B cell (primary cell): ENCODE measurements at regions of chr17 and their contacts with region 1.

Region 1: DNA sequence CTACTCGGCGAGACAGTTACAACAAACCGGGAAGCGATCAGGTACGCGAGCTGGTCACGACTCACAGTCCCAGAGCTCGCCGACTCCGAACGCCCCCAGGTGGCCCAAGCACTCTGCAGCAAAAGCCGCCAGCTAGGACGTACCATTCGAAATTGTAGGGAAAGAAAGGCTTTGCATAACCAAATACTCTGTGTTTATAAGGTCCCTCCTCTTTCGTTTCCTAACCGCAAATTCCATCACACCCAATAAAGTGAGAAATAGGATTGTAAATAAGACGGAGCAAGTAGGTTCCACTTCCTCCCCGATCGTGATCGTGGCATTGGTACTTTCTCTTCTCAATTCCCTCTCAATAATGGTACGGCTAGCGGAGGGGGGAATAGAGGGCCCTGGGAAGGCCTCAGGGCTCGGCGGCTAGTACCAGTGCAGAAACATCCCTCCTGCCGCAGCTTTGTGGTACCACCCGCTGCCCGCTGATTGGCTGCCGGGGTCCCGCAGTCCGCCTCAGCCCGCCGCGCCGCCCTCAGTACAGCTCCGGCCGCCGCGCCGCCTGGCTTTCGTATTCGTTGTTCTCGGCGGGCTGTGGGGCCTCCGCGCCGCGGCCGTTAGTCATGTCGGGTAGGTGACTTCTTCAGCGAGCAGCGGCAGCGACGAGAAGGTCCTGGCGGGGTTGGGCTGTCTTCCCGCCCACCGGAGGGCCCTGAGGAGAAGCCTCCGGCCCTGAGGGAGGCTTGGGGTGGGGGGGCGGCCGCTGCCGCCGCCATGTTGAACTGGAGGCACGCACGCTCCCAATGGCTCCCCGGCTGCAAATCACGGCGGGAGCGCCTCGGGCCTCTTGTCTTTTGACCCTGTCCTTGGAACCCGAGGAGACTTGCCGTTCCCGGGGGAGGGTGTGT is at the start of gene TAF15:
- DNase-seq: peak; percentile 98
- ATAC-seq: peak; percentile 87
- H3K4me3 ChIP-seq: peak within 1 kb of the TSS; percentile 71 to 92 (median 90)
- H3K4me3 Mint-ChIP-seq: peak within 1 kb of the TSS; percentile 92
- H3K27ac ChIP-seq: peak within 1 kb of the TSS; percentile 91 to 93
- H3K27ac Mint-ChIP-seq: peak within 1 kb of the TSS; percentile 97
- H3K4me1 ChIP-seq: peaks cover 29 to 34% of the 10 kb centered on the region in 2 donors
- H3K4me1 Mint-ChIP-seq: peaks cover 47% of the 10 kb centered on the region
- H3K27me3 ChIP-seq: no peaks in the 10 kb centered on the region
- H3K27me3 Mint-ChIP-seq: no peaks in the 10 kb centered on the region
- CTCF ChIP-seq: peak; percentile 81
- total RNA-seq, gene TAF15: 246 and 249 TPM in 2 replicates

Region 2: GRCh38 chr17:35322749-35323148 is 486.5 kb before region 1 on chr17:
- CTCF ChIA-PET with region 1: no interaction called
- POLR2A ChIA-PET with region 1: no interaction called
- intact Hi-C with region 1: no loop called
- DNase-seq: no peak
- ATAC-seq: no peak
- H3K4me3 ChIP-seq: no peak overlapping the region
- H3K4me3 Mint-ChIP-seq: no peak overlapping the region
- H3K27ac ChIP-seq: no peak overlapping the region
- H3K27ac Mint-ChIP-seq: no peak overlapping the region
- H3K4me1 ChIP-seq: no peaks in the 10 kb centered on the region
- H3K4me1 Mint-ChIP-seq: no peaks in the 10 kb centered on the region
- H3K27me3 ChIP-seq: no peaks in the 10 kb centered on the region
- H3K27me3 Mint-ChIP-seq: no peaks in the 10 kb centered on the region
- CTCF ChIP-seq: no peak

Region 3: DNA sequence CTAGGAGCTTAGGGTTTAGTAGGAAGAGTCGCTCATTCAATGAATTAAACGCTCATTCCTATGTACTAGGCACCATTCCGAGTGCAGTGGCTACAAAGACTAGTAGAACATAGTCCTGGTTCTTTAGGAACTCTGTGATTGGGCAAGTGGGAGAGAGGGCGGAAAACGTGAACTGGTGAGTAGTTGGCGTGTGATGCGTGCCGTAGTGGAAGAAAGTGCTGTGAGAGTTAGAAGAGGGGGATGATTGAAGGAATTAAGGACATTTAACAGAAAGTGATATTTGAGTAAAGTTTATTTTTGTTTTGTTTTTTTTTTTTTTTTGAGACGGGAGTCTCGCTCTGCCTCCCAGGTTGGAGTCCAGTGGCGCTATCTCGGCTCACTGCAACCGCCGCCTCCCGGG is 240.7 kb before region 1 on chr17:
- CTCF ChIA-PET with region 1: no interaction called
- POLR2A ChIA-PET with region 1: no interaction called
- intact Hi-C with region 1: loop called (anchors 1 kb)
- DNase-seq: no peak
- ATAC-seq: no peak
- H3K4me3 ChIP-seq: peak overlapping the region; percentile 76 to 98 (median 91)
- H3K4me3 Mint-ChIP-seq: peak overlapping the region; percentile 99
- H3K27ac ChIP-seq: peak overlapping the region in 1 of 2 donors; percentile 84
- H3K27ac Mint-ChIP-seq: peak overlapping the region; percentile 95
- H3K4me1 ChIP-seq: peaks cover 14 to 16% of the 10 kb centered on the region in 2 donors
- H3K4me1 Mint-ChIP-seq: peaks cover 23% of the 10 kb centered on the region
- H3K27me3 ChIP-seq: no peaks in the 10 kb centered on the region
- H3K27me3 Mint-ChIP-seq: peaks cover 2% of the 10 kb centered on the region
- CTCF ChIP-seq: no peak

Region 4: DNA sequence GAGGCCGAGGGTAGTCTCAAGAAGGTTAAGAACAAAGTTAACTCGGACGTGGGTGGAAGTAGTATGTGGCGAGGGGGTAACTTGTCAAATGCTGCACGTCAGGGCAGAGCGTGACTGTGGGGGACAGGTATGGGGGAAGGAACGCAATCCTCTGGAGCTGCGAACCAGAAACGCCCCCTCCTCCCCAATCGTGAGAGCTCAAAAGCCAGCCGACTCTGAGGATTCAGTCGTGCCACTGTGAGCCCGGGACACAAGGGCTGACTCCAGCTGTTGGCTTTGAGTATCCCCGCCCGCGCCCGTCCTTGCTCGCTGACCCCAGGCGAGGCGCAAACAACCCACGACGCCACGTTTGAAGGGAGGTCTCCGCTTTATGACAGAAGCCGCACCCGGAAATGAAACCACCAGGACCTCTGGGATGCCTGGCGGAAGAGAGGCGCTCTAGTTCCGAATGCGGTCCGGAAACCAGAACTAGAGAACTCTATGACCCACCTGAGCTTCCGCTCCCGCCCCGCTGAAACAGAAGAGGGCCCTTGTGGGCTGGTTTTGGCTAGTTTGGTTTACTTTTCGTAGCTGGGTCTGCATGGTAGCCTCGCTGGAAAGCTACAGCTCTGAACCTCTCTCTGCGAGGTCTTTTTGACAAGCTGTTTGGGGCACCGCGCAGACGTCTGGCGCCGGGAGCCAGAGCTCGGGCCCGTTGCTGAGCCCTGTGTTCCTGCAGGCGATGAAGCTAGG is 230.8 kb before region 1 on chr17 and contains the start of gene PEX12:
- CTCF ChIA-PET with region 1: no interaction called
- POLR2A ChIA-PET with region 1: interaction called, 10 read pairs
- intact Hi-C with region 1: no loop called
- DNase-seq: peak; percentile 94
- ATAC-seq: peak; percentile 95
- H3K4me3 ChIP-seq: peak within 1 kb of the TSS; percentile 80 to 99 (median 95)
- H3K4me3 Mint-ChIP-seq: peak within 1 kb of the TSS; percentile 97
- H3K27ac ChIP-seq: peak within 1 kb of the TSS; percentile 86 to 89
- H3K27ac Mint-ChIP-seq: peak within 1 kb of the TSS; percentile 98
- H3K4me1 ChIP-seq: peaks cover 16 to 20% of the 10 kb centered on the region in 2 donors
- H3K4me1 Mint-ChIP-seq: peaks cover 25% of the 10 kb centered on the region
- H3K27me3 ChIP-seq: no peaks in the 10 kb centered on the region
- H3K27me3 Mint-ChIP-seq: no peaks in the 10 kb centered on the region
- CTCF ChIP-seq: no peak
- total RNA-seq, gene PEX12: 5.1 and 5.5 TPM in 2 replicates

Region 5: DNA sequence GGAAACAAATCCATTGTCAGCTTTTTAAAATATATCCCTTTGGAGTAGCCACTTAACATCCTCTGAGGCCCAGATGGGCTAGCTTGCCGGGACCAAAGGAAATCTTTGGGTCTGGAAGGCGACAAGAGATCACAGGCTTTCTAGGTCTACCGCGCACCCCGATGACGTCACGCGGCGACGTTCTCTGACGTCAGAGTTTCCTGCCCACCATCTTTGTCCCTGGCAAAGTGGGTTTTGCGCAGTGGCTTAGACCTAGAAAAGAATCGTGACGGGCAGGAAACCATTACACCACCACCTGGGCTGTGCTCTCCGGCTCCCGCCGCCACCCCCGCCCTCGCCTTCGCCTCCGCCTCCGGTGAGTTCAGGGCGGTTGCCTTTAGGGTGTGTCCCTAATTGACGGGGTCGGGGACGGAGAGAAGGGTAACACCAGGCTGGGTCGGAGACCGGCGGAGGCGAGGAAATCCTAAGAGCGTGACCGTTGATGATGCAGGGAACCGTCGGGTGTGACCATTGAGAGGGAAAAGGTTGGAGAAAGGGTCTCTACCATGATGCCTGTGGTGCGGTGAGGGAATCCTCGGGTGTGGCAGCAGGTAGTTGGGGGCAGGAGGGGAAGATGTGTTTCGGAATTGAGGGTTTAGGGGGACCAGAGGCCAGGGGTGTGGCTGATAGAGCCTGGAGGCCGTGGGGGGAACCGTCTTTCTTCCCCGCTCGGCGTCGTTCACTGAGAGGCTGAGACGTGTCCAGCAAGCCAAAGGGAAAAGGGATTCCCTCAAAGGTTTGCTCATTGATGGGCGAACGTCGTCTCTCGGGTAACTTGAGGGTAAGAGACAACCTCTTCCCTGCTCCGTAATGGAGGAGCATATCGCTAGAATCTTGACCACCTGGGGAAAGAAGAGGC is 221.9 kb before region 1 on chr17 and contains the start of gene AP2B1:
- CTCF ChIA-PET with region 1: interaction called, 3 read pairs
- POLR2A ChIA-PET with region 1: no interaction called
- intact Hi-C with region 1: loop called (anchors 1 kb)
- DNase-seq: peak; percentile 99
- ATAC-seq: peak; percentile 98
- H3K4me3 ChIP-seq: peak within 1 kb of the TSS; percentile 59 to 100 (median 90)
- H3K4me3 Mint-ChIP-seq: peak within 1 kb of the TSS; percentile 92
- H3K27ac ChIP-seq: peak within 1 kb of the TSS; percentile 83 to 89
- H3K27ac Mint-ChIP-seq: peak within 1 kb of the TSS; percentile 95
- H3K4me1 ChIP-seq: peaks cover 11 to 19% of the 10 kb centered on the region in 2 donors
- H3K4me1 Mint-ChIP-seq: peaks cover 33% of the 10 kb centered on the region
- H3K27me3 ChIP-seq: no peaks in the 10 kb centered on the region
- H3K27me3 Mint-ChIP-seq: peaks cover 7% of the 10 kb centered on the region
- CTCF ChIP-seq: no peak
- total RNA-seq, gene AP2B1: 120 and 123 TPM in 2 replicates

Region 6: DNA sequence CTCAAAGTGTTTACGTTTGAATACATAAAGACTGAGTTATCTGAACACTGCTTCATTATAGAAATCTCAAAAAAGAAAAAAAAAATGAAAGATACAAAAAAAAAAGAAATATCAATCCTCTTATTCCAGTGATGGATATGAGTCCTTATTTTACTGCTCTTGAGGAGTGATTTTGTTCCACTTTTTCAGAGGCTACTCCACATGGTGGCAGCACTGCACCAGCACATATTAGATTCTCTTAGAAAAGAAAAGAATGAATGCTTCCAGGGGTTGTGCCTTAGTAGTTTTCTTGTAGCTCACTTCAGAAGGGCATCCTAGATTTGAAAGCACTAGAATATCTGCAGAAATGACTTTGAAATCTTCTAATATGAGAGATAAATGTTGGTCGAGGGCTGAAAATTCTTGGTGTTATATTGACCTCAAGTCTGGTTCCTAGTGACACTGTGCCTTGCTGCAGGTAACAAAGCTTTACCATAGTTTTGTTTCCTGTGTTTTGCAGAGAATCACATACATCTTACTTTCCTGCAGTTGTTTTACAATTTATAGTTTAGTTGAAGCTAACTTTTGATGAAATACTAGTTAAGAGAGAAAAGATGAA is 196.2 kb before region 1 on chr17:
- CTCF ChIA-PET with region 1: interaction called, 8 read pairs
- POLR2A ChIA-PET with region 1: no interaction called
- intact Hi-C with region 1: loop called (anchors 10 kb)
- DNase-seq: peak; percentile 46
- ATAC-seq: no peak
- H3K4me3 ChIP-seq: no peak overlapping the region
- H3K4me3 Mint-ChIP-seq: no peak overlapping the region
- H3K27ac ChIP-seq: no peak overlapping the region
- H3K27ac Mint-ChIP-seq: no peak overlapping the region
- H3K4me1 ChIP-seq: no peaks in the 10 kb centered on the region
- H3K4me1 Mint-ChIP-seq: peaks cover 4% of the 10 kb centered on the region
- H3K27me3 ChIP-seq: no peaks in the 10 kb centered on the region
- H3K27me3 Mint-ChIP-seq: no peaks in the 10 kb centered on the region
- CTCF ChIP-seq: peak; percentile 67

Region 7: GRCh38 chr17:35794988-35795824 is 14.0 kb before region 1 on chr17 and contains the start of gene MMP28:
- CTCF ChIA-PET with region 1: interaction called, 9 read pairs
- POLR2A ChIA-PET with region 1: interaction called, 11 read pairs
- intact Hi-C with region 1: no loop called
- DNase-seq: peak; percentile 45
- ATAC-seq: peak; percentile 76
- H3K4me3 ChIP-seq: peak within 1 kb of the TSS in 4 of 5 experiments; percentile 8 to 61 (median 56)
- H3K4me3 Mint-ChIP-seq: peak within 1 kb of the TSS; percentile 86
- H3K27ac ChIP-seq: no peak within 1 kb of the TSS
- H3K27ac Mint-ChIP-seq: peak within 1 kb of the TSS; percentile 5
- H3K4me1 ChIP-seq: peaks cover 12 to 14% of the 10 kb centered on the region in 2 donors
- H3K4me1 Mint-ChIP-seq: peaks cover 18% of the 10 kb centered on the region
- H3K27me3 ChIP-seq: peaks cover 0 to 69% (median 31%) of the 10 kb centered on the region in 4 experiments
- H3K27me3 Mint-ChIP-seq: peaks cover 41% of the 10 kb centered on the region
- CTCF ChIP-seq: no peak
- total RNA-seq, gene MMP28: 2.0 and 2.4 TPM in 2 replicates